ENCODE measurements at regions of chr15 and their contacts with region 1.

Region 1: DNA sequence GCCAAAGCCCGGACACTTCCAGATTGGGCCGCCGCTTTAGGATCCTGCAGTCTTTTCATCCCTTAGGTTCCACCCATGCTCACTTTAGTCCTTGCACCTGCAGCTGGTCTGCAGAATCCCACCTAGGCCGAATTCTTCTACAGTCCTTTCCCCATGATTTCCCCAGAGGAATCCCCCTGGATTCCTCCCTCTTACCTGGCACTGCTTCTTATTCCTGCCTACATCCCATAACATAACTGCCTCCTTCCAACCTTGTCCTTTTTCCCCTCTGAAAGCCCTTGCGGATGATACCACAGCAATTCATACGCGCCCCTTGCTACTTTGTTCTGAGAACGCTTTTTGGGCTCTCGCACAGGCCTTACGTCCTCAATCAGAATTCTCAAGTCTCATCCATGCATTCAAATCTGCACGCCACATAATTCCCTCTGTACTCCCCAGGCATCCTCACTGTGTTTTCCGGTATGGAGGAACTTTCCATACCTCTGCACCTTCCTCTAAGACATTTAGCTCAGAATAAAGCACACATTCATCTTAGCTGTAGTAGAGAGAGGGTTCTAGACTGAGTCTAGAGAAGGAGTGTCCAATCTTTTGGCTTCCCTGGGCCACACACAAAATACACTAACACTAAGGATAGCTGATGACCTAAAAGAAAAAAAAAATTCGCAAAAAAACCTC is 619 bp downstream of the EIF2AK4 start:
- DNase-seq: peak; percentile 47
- H3K4me3 ChIP-seq: peak overlapping the region; percentile 33 to 77 (median 57)
- H3K27ac ChIP-seq: peak overlapping the region; percentile 92
- H3K4me1 ChIP-seq: peaks cover 22% of the 10 kb centered on the region
- H3K27me3 ChIP-seq: no peaks in the 10 kb centered on the region
- CTCF ChIP-seq: no peak
- POLR2A ChIP-seq: no peak

Region 2: DNA sequence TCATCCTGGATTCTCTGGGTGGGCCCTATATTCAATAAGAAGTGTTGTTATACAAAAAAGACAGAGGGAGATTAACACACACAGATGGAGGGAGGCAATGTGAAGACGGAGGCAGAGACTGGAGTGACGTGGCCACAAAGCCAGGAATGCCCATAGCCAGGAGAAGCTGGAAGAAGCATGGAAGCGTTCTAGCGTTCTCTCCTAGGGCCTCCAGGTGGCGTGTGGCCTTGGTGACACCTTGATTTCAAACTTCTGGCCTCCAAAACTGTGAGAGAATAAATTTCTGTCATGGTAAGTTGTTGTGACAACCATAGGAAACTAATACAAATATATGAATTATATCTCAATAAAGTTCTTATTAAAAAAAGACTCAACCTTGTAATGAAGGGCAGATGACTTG is 332.4 kb before region 1 on chr15:
- CTCF ChIA-PET with region 1: no interaction called
- POLR2A ChIA-PET with region 1: no interaction called
- dilution Hi-C with region 1: no loop called
- intact Hi-C with region 1: loop called (anchors 5 kb)
- DNase-seq: no peak
- H3K4me3 ChIP-seq: no peak overlapping the region
- H3K27ac ChIP-seq: no peak overlapping the region
- H3K4me1 ChIP-seq: peaks cover 7% of the 10 kb centered on the region
- H3K27me3 ChIP-seq: no peaks in the 10 kb centered on the region
- CTCF ChIP-seq: peak; percentile 24 to 31
- POLR2A ChIP-seq: no peak

Region 3: GRCh38 chr15:39920510-39921273 is 13.8 kb before region 1 on chr15:
- CTCF ChIA-PET with region 1: interaction called, 22 read pairs
- POLR2A ChIA-PET with region 1: interaction called, 21 read pairs
- dilution Hi-C with region 1: no loop called
- intact Hi-C with region 1: loop called (anchors 1 kb)
- DNase-seq: peak; percentile 83
- H3K4me3 ChIP-seq: peak overlapping the region; percentile 77 to 93 (median 79)
- H3K27ac ChIP-seq: peak overlapping the region; percentile 82
- H3K4me1 ChIP-seq: peaks cover 21% of the 10 kb centered on the region
- H3K27me3 ChIP-seq: no peaks in the 10 kb centered on the region
- CTCF ChIP-seq: peak in 1 of 2 donors; percentile 5
- POLR2A ChIP-seq: peak; percentile 73

Region 4: DNA sequence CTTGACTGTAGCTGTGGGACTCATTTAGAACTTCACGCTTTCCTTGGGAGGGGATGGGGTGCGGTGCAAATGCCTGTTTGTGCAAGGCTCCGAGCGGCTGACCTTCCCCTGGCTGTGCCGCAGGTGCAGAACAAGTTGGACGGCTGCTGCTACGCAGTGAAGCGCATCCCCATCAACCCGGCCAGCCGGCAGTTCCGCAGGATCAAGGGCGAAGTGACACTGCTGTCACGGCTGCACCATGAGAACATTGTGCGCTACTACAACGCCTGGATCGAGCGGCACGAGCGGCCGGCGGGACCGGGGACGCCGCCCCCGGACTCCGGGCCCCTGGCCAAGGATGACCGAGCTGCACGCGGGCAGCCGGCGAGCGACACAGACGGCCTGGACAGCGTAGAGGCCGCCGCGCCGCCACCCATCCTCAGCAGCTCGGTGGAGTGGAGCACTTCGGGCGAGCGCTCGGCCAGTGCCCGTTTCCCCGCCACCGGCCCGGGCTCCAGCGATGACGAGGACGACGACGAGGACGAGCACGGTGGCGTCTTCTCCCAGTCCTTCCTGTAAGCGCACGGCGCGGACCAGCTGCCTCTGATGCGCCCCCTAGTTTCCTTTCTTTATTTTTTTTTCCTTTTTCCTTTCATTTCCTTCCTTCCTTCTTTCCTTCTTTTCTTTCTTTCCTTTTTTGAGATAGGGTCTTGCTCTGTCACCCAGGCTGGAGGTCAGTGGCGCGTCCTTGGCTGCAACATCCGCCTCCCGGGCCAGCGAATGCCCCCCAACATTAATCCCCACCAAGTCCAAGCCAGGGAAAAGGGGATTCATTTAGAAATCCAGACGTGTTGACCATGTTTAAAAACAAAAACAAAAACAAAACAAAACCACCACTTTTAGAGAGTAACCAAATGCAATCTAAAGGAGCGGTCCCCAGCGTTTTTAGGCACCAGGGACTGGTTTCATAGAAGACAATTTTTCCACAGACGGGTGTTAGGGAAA is 42.0 kb after region 1 on chr15:
- CTCF ChIA-PET with region 1: interaction called, 3 read pairs
- POLR2A ChIA-PET with region 1: interaction called, 4 read pairs
- dilution Hi-C with region 1: no loop called
- intact Hi-C with region 1: loop called (anchors 5 kb)
- DNase-seq: peak; percentile 70
- H3K4me3 ChIP-seq: peak overlapping the region; percentile 2 to 56 (median 37)
- H3K27ac ChIP-seq: peak overlapping the region; percentile 28
- H3K4me1 ChIP-seq: peaks cover 4% of the 10 kb centered on the region
- H3K27me3 ChIP-seq: no peaks in the 10 kb centered on the region
- CTCF ChIP-seq: peak; percentile 30 to 40
- POLR2A ChIP-seq: no peak